CD4-positive, alpha-beta memory T cell (primary cell): ENCODE measurements at regions of chr9 and their contacts with region 1.

Region 1: DNA sequence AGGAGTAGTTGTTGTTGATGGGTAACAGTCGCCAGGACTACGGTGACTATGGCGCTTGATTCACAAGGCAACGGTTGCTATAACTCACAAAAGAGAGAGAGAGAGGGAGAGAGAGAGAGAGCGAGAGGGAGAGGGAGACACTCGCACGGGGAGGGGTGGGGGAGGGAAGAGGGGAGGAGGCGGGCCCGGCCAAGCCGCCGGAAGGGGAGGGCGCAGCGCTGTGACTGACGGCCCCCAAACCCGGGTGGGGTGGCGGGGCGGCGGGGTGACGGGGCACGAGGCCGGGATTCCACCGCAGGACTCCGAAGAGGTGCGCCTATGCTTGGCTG is at the start of gene RFX3:
- DNase-seq: peak; percentile 91 to 95 (median 95)
- H3K4me3 ChIP-seq: peak within 1 kb of the TSS; percentile 70 to 93
- H3K4me3 Mint-ChIP-seq: peak within 1 kb of the TSS; percentile 89 to 97 (median 94)
- H3K27ac ChIP-seq: peak within 1 kb of the TSS; percentile 100
- H3K27ac Mint-ChIP-seq: peak within 1 kb of the TSS; percentile 95 to 100 (median 98)
- H3K4me1 ChIP-seq: peaks cover 65% of the 10 kb centered on the region
- H3K4me1 Mint-ChIP-seq: peaks cover 41 to 76% (median 54%) of the 10 kb centered on the region in 4 donors
- H3K27me3 ChIP-seq: no peaks in the 10 kb centered on the region
- H3K27me3 Mint-ChIP-seq: peaks cover 1 to 7% of the 10 kb centered on the region in 2 donors
- total RNA-seq, gene RFX3: 25.9 to 30.8 TPM

Region 2: GRCh38 chr9:3398232-3398648 is 127.6 kb before region 1 on chr9:
- CTCF ChIA-PET with region 1: no interaction called
- POLR2A ChIA-PET with region 1: no interaction called
- intact Hi-C with region 1: loop called (anchors 5 kb)
- DNase-seq: peak in 4 of 5 donors; percentile 25 to 39 (median 28)
- H3K4me3 ChIP-seq: no peak overlapping the region
- H3K4me3 Mint-ChIP-seq: peak overlapping the region; percentile 29 to 80 (median 72)
- H3K27ac ChIP-seq: no peak overlapping the region
- H3K27ac Mint-ChIP-seq: peak overlapping the region in 6 of 7 donors; percentile 59 to 90 (median 76)
- H3K4me1 ChIP-seq: peaks cover 17% of the 10 kb centered on the region
- H3K4me1 Mint-ChIP-seq: peaks cover 13 to 41% (median 24%) of the 10 kb centered on the region in 4 donors
- H3K27me3 ChIP-seq: no peaks in the 10 kb centered on the region
- H3K27me3 Mint-ChIP-seq: no peaks in the 10 kb centered on the region

Region 3: DNA sequence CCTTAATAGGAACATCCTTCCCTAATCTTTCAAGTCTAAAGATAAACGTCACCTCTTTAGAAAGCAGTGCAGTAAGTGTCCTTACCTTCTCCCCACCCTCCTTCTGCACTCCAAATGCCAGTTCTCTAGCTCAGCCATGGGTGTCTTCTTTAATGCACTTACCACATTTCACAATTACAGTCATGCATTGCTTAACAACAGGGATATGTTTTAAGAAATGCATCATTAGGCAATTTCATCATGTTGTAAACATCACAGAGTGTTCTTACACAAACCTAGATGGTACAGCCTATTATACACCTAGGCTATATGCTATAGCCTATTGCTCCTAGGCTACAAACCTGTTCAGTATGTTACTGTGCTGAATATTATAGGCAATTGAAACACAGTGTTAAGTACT is 91.2 kb before region 1 on chr9:
- CTCF ChIA-PET with region 1: no interaction called
- POLR2A ChIA-PET with region 1: no interaction called
- intact Hi-C with region 1: no loop called
- DNase-seq: no peak
- H3K4me3 ChIP-seq: no peak overlapping the region
- H3K4me3 Mint-ChIP-seq: no peak overlapping the region
- H3K27ac ChIP-seq: no peak overlapping the region
- H3K27ac Mint-ChIP-seq: peak overlapping the region in 1 of 7 donors; percentile 7
- H3K4me1 ChIP-seq: no peaks in the 10 kb centered on the region
- H3K4me1 Mint-ChIP-seq: peaks cover 0 to 5% (median 2%) of the 10 kb centered on the region in 4 donors
- H3K27me3 ChIP-seq: no peaks in the 10 kb centered on the region
- H3K27me3 Mint-ChIP-seq: no peaks in the 10 kb centered on the region

Region 4: DNA sequence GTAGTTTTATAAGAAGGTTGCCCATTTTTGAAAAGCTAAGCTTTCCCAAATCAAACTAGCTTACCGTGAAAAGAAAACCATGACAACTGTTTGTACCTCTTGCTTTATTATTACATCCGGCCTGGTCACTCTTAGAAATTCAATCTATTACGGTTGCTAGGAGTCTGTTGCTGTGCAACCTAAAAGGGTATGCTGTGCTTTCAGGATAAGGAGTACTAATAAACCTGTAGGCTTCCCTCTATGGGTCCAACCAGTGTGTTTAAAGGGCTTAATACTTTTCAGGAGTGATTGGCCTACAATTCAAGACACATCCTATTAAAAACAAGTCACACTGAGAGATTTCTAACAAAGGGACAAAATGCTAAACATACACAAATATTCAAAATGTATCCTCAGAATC is 27.1 kb before region 1 on chr9:
- CTCF ChIA-PET with region 1: interaction called, 6 read pairs
- POLR2A ChIA-PET with region 1: interaction called, 17 read pairs
- intact Hi-C with region 1: no loop called
- DNase-seq: peak in 1 of 5 donors; percentile 3
- H3K4me3 ChIP-seq: no peak overlapping the region
- H3K4me3 Mint-ChIP-seq: no peak overlapping the region
- H3K27ac ChIP-seq: no peak overlapping the region
- H3K27ac Mint-ChIP-seq: no peak overlapping the region
- H3K4me1 ChIP-seq: no peaks in the 10 kb centered on the region
- H3K4me1 Mint-ChIP-seq: peaks cover 17 to 23% (median 19%) of the 10 kb centered on the region in 4 donors
- H3K27me3 ChIP-seq: no peaks in the 10 kb centered on the region
- H3K27me3 Mint-ChIP-seq: no peaks in the 10 kb centered on the region

Region 5: GRCh38 chr9:3549225-3549624 is 23.4 kb after region 1 on chr9:
- CTCF ChIA-PET with region 1: interaction called, 3 read pairs
- POLR2A ChIA-PET with region 1: interaction called, 13 read pairs
- intact Hi-C with region 1: no loop called
- DNase-seq: no peak
- H3K4me3 ChIP-seq: no peak overlapping the region
- H3K4me3 Mint-ChIP-seq: no peak overlapping the region
- H3K27ac ChIP-seq: no peak overlapping the region
- H3K27ac Mint-ChIP-seq: peak overlapping the region in 1 of 7 donors; percentile 26
- H3K4me1 ChIP-seq: no peaks in the 10 kb centered on the region
- H3K4me1 Mint-ChIP-seq: peaks cover 0 to 3% (median 0%) of the 10 kb centered on the region in 4 donors
- H3K27me3 ChIP-seq: no peaks in the 10 kb centered on the region
- H3K27me3 Mint-ChIP-seq: no peaks in the 10 kb centered on the region

Region 6: DNA sequence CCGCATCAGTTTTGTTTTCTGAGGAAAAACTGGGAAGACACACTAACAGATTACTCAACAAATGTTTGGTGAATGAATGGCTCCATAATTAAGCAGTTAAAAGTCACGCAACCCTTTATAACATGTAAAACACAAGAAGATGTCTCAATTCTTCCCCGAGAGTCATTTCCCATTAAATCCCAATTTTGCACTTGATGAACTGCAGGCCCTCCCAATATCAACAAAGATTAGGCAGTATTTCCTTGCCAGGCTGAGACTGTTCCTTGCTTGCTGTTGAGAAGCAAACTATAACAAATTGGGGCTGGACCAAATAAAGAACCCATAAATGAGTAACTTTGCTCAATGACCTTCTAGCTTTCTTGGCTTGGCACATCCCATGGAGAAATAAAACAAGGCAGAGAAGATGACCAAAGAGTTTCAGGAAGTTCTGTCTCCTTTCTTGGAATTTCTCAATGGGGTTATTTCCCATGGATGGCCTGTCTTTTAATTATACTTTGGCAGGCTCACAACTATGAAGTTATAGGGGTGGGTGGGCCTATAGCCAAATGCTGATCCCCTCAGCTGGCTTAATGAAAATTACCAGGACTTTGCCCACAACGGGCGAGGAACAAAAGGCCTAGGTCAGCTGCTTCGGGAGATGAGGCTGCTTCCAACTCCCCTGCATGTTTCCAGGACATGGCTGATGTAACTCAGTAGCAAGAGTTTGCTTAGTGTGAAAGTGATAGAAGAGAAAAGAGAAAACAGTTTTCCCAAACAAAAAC is 243.1 kb after region 1 on chr9:
- CTCF ChIA-PET with region 1: no interaction called
- POLR2A ChIA-PET with region 1: no interaction called
- intact Hi-C with region 1: no loop called
- DNase-seq: no peak
- H3K4me3 ChIP-seq: no peak overlapping the region
- H3K4me3 Mint-ChIP-seq: no peak overlapping the region
- H3K27ac ChIP-seq: no peak overlapping the region
- H3K27ac Mint-ChIP-seq: no peak overlapping the region
- H3K4me1 ChIP-seq: no peaks in the 10 kb centered on the region
- H3K4me1 Mint-ChIP-seq: no peaks in the 10 kb centered on the region
- H3K27me3 ChIP-seq: no peaks in the 10 kb centered on the region
- H3K27me3 Mint-ChIP-seq: peaks cover 6 to 13% of the 10 kb centered on the region in 2 donors

Region 7: GRCh38 chr9:4662108-4662988 is 1136.5 kb after region 1 on chr9 and contains the start of gene PLPP6:
- CTCF ChIA-PET with region 1: no interaction called
- POLR2A ChIA-PET with region 1: interaction called, 14 read pairs
- intact Hi-C with region 1: loop called (anchors 5 kb)
- DNase-seq: peak; percentile 70 to 86 (median 76)
- H3K4me3 ChIP-seq: peak within 1 kb of the TSS; percentile 42 to 83
- H3K4me3 Mint-ChIP-seq: peak within 1 kb of the TSS; percentile 91 to 99 (median 96)
- H3K27ac ChIP-seq: peak within 1 kb of the TSS; percentile 67
- H3K27ac Mint-ChIP-seq: peak within 1 kb of the TSS; percentile 95 to 99 (median 96)
- H3K4me1 ChIP-seq: peaks cover 58% of the 10 kb centered on the region
- H3K4me1 Mint-ChIP-seq: peaks cover 47 to 78% (median 59%) of the 10 kb centered on the region in 4 donors
- H3K27me3 ChIP-seq: no peaks in the 10 kb centered on the region
- H3K27me3 Mint-ChIP-seq: no peaks in the 10 kb centered on the region
- total RNA-seq, gene PLPP6: 23.3 to 23.8 TPM

Region 8: GRCh38 chr9:4792572-4793458 is 1267.0 kb after region 1 on chr9 and contains the start of gene RCL1:
- CTCF ChIA-PET with region 1: no interaction called
- POLR2A ChIA-PET with region 1: interaction called, 15 read pairs
- intact Hi-C with region 1: loop called (anchors 1 kb)
- DNase-seq: peak; percentile 95 to 98 (median 97)
- H3K4me3 ChIP-seq: peak within 1 kb of the TSS; percentile 83 to 88
- H3K4me3 Mint-ChIP-seq: peak within 1 kb of the TSS; percentile 93 to 97 (median 95)
- H3K27ac ChIP-seq: peak within 1 kb of the TSS; percentile 70
- H3K27ac Mint-ChIP-seq: peak within 1 kb of the TSS; percentile 84 to 97 (median 96)
- H3K4me1 ChIP-seq: peaks cover 23% of the 10 kb centered on the region
- H3K4me1 Mint-ChIP-seq: peaks cover 29 to 52% (median 38%) of the 10 kb centered on the region in 4 donors
- H3K27me3 ChIP-seq: no peaks in the 10 kb centered on the region
- H3K27me3 Mint-ChIP-seq: peaks cover 0 to 4% of the 10 kb centered on the region in 2 donors
- total RNA-seq, gene RCL1: 15.2 to 17.8 TPM

Region 9: DNA sequence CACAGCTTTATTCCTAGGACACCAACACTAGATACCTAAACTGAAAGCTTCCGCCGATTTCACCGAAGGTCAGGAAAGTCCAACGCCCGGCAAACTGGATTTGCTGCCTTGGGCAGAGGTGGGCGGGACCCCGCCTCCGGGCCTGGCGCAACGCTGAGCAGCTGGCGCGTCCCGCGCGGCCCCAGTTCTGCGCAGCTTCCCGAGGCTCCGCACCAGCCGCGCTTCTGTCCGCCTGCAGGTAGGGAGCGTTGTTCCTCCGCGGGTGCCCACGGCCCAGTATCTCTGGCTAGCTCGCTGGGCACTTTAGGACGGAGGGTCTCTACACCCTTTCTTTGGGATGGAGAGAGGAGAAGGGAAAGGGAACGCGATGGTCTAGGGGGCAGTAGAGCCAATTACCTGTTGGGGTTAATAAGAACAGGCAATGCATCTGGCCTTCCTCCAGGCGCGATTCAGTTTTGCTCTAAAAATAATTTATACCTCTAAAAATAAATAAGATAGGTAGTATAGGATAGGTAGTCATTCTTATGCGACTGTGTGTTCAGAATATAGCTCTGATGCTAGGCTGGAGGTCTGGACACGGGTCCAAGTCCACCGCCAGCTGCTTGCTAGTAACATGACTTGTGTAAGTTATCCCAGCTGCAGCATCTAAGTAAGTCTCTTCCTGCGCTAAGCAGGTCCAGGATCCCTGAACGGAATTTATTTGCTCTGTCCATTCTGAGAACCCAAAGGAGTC is 1924.7 kb after region 1 on chr9 and contains the start of gene CD274:
- CTCF ChIA-PET with region 1: no interaction called
- POLR2A ChIA-PET with region 1: interaction called, 4 read pairs
- intact Hi-C with region 1: loop called (anchors 5 kb)
- DNase-seq: peak; percentile 78 to 82 (median 80)
- H3K4me3 ChIP-seq: peak within 1 kb of the TSS; percentile 65 to 67
- H3K4me3 Mint-ChIP-seq: peak within 1 kb of the TSS; percentile 87 to 96 (median 94)
- H3K27ac ChIP-seq: peak within 1 kb of the TSS; percentile 97
- H3K27ac Mint-ChIP-seq: peak within 1 kb of the TSS; percentile 92 to 99 (median 95)
- H3K4me1 ChIP-seq: peaks cover 77% of the 10 kb centered on the region
- H3K4me1 Mint-ChIP-seq: peaks cover 50 to 89% (median 62%) of the 10 kb centered on the region in 4 donors
- H3K27me3 ChIP-seq: no peaks in the 10 kb centered on the region
- H3K27me3 Mint-ChIP-seq: no peaks in the 10 kb centered on the region
- total RNA-seq, gene CD274: 16.2 to 23.0 TPM